CD8-positive, alpha-beta T cell (primary cell): ENCODE measurements at regions of chr11 and their contacts with region 1.

Region 1: DNA sequence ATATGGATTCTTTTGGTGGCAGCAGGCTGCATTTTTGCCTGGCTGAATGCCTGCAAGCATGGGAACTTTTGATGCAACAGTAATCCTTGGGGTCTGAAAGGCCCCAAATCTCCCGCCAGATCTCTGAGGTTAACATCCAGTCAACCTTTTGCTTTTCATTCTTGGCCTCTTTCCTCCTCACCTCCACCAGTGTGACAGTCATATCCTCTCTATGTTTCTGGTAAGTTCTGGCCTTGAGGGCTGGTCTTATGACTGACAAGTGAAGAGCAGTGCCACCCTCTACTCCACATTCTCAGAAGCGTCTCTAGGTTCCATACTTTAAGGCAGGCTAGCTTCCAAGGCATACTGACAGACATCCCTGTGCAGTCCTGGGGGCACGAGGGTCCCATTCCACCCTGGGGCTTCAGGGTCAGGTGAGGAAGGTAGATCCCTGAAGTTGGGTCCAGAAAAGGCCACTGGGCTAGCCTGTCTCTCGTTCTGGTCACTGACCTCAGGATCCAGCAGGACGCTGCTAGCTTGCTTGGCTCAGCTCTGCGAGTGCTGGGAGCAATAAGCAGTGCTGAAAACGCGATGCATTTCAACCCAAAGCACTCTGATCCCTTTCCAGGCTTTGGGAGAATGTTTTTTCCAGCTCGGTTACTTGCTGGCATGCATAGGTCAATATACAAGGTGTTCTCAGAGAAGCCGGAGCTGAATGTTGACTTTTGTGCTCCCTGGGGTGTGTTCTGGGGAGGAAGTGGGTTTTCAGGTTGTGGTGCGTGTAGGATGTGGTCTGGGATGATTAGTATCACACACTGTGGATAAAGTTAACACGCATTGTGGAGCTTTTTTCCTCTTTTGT is 75.2 kb downstream of the PTPRJ start:
- DNase-seq: peak in 8 of 9 experiments; percentile 36 to 80 (median 58)
- ATAC-seq: peak; percentile 76
- H3K4me3 ChIP-seq: peak overlapping the region; percentile 0 to 36
- H3K4me3 Mint-ChIP-seq: peak overlapping the region; percentile 72
- H3K27ac ChIP-seq: peak overlapping the region; percentile 13 to 38
- H3K27ac Mint-ChIP-seq: peak overlapping the region; percentile 87
- H3K4me1 ChIP-seq: peaks cover 69% of the 10 kb centered on the region
- H3K4me1 Mint-ChIP-seq: peaks cover 80% of the 10 kb centered on the region
- H3K27me3 ChIP-seq: no peaks in the 10 kb centered on the region
- H3K27me3 Mint-ChIP-seq: no peaks in the 10 kb centered on the region
- CTCF ChIP-seq: no peak

Region 2: DNA sequence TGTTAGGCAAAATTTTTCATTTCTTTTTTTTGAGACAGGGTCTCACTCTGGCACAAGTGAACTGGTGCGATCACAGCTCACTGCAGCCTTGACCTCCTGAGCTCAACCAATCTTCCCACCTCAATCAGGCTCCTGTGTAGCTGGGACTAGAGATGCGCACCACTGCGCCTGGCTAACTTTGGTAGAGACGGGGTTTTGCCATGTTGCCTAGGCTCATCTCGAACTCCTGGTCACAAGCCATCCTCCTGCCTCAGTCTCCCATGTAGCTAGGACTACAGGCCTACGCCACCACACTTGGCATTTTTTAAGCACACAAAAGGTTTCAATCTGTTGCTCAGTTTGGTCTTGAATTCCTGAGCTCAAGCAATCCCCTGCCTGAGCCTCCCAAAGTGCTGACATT is 297.4 kb before region 1 on chr11:
- CTCF ChIA-PET with region 1: no interaction called
- POLR2A ChIA-PET with region 1: no interaction called
- intact Hi-C with region 1: no loop called
- DNase-seq: peak in 1 of 9 experiments; percentile 27
- ATAC-seq: no peak
- H3K4me3 ChIP-seq: no peak overlapping the region
- H3K4me3 Mint-ChIP-seq: no peak overlapping the region
- H3K27ac ChIP-seq: no peak overlapping the region
- H3K27ac Mint-ChIP-seq: peak overlapping the region; percentile 60
- H3K4me1 ChIP-seq: no peaks in the 10 kb centered on the region
- H3K4me1 Mint-ChIP-seq: peaks cover 19% of the 10 kb centered on the region
- H3K27me3 ChIP-seq: no peaks in the 10 kb centered on the region
- H3K27me3 Mint-ChIP-seq: no peaks in the 10 kb centered on the region
- CTCF ChIP-seq: no peak

Region 3: DNA sequence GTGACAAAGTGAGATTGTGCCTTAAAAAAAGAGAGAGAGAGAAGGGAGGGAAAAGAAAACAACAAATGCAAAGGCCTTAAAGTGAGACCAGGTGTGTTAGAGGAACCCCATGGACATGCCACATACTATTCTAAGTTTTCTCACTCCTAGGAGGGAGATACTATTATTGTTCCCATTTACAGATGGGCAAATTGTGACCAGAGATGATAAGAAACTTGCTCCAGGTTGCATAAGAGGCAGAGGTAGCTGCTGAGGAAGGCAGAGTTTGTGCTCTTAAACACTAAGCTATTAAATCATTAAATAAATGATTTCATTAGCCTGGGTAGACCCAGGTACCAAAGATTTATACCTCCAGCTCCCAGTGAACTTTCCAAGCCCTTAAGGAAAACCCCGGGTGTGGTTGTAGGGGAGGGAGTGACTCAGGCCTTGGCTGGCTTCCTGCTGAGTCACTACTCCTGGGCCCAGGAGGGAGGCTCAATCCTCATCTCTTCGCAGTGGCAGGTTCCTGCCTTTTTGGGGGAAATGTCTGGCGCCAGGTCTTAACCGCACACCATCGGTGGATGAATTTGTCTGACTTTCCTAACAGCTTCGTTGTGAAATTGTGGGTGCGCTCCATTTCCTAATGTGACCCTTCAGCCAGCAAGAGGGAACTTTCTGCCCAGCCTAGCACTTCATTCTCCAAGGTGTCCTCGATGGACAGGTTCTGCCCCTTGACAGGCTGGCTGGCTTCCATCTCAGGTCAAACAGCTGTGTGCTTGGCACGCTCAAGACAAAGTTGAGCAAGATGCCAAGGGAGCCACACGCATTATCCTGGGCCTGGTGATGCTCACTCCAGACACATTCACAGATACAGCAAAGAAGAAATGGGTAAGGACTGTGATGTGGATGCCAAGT is 108.6 kb before region 1 on chr11:
- CTCF ChIA-PET with region 1: no interaction called
- POLR2A ChIA-PET with region 1: no interaction called
- intact Hi-C with region 1: loop called in 1 of 2 experiments (anchors 5 kb)
- DNase-seq: peak in 2 of 9 experiments; percentile 17 to 33
- ATAC-seq: no peak
- H3K4me3 ChIP-seq: no peak overlapping the region
- H3K4me3 Mint-ChIP-seq: no peak overlapping the region
- H3K27ac ChIP-seq: no peak overlapping the region
- H3K27ac Mint-ChIP-seq: no peak overlapping the region
- H3K4me1 ChIP-seq: peaks cover 22% of the 10 kb centered on the region
- H3K4me1 Mint-ChIP-seq: peaks cover 30% of the 10 kb centered on the region
- H3K27me3 ChIP-seq: no peaks in the 10 kb centered on the region
- H3K27me3 Mint-ChIP-seq: no peaks in the 10 kb centered on the region
- CTCF ChIP-seq: no peak

Region 4: DNA sequence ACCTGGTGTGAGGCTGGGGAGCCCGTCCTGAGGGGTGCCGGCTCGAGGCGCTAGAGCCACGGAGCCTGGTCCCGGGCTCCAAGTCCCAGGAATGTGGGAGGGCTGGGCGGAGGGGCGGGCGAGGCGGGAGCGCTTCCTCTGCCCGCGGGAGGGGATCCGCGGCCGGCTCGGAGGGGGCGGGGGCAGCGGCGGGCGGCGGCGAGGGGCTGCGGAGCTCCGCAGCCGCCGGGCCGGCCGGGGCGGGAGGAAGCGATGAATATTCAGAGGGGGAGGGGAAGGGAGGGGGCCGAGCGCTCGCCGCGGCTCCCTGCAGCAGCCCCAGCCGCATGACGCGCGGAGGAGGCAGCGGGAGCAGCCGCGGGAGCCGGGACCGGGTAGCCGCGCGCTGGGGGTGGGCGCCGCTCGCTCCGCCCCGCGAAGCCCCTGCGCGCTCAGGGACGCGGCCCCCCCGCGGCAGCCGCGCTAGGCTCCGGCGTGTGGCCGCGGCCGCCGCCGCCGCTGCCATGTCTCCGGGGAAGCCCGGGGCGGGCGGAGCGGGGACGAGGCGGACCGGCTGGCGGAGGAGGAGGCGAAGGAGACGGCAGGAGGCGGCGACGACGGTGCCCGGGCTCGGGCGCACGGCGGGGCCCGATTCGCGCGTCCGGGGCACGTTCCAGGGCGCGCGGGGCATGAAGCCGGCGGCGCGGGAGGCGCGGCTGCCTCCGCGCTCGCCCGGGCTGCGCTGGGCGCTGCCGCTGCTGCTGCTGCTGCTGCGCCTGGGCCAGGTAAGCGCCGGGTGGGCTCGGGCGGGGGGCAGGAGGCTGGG is 75.1 kb before region 1 on chr11 and contains the start of gene PTPRJ:
- CTCF ChIA-PET with region 1: interaction called, 3 read pairs
- POLR2A ChIA-PET with region 1: interaction called, 4 read pairs
- intact Hi-C with region 1: loop called in 1 of 2 experiments (anchors 5 kb)
- DNase-seq: peak in 8 of 9 experiments; percentile 39 to 85 (median 63)
- ATAC-seq: peak; percentile 70
- H3K4me3 ChIP-seq: peak within 1 kb of the TSS; percentile 43 to 65
- H3K4me3 Mint-ChIP-seq: peak within 1 kb of the TSS; percentile 93
- H3K27ac ChIP-seq: peak within 1 kb of the TSS; percentile 19 to 40
- H3K27ac Mint-ChIP-seq: peak within 1 kb of the TSS; percentile 52
- H3K4me1 ChIP-seq: peaks cover 30% of the 10 kb centered on the region
- H3K4me1 Mint-ChIP-seq: peaks cover 36% of the 10 kb centered on the region
- H3K27me3 ChIP-seq: no peaks in the 10 kb centered on the region
- H3K27me3 Mint-ChIP-seq: no peaks in the 10 kb centered on the region
- CTCF ChIP-seq: no peak
- total RNA-seq, gene PTPRJ: 26.9 to 31.4 TPM

Region 5: GRCh38 chr11:48013269-48013901 is 42.1 kb before region 1 on chr11:
- CTCF ChIA-PET with region 1: interaction called, 3 read pairs
- POLR2A ChIA-PET with region 1: interaction called, 12 read pairs
- intact Hi-C with region 1: no loop called
- DNase-seq: peak in 8 of 9 experiments; percentile 18 to 85 (median 63)
- ATAC-seq: peak; percentile 42
- H3K4me3 ChIP-seq: peak overlapping the region in 1 of 2 experiments; percentile 0
- H3K4me3 Mint-ChIP-seq: peak overlapping the region; percentile 27
- H3K27ac ChIP-seq: peak overlapping the region; percentile 36 to 91
- H3K27ac Mint-ChIP-seq: peak overlapping the region; percentile 92
- H3K4me1 ChIP-seq: peaks cover 85% of the 10 kb centered on the region
- H3K4me1 Mint-ChIP-seq: peaks cover 81% of the 10 kb centered on the region
- H3K27me3 ChIP-seq: no peaks in the 10 kb centered on the region
- H3K27me3 Mint-ChIP-seq: no peaks in the 10 kb centered on the region
- CTCF ChIP-seq: no peak

Region 6: GRCh38 chr11:48024635-48025071 is 30.9 kb before region 1 on chr11:
- CTCF ChIA-PET with region 1: no interaction called
- POLR2A ChIA-PET with region 1: no interaction called
- intact Hi-C with region 1: no loop called
- DNase-seq: no peak
- ATAC-seq: no peak
- H3K4me3 ChIP-seq: no peak overlapping the region
- H3K4me3 Mint-ChIP-seq: no peak overlapping the region
- H3K27ac ChIP-seq: no peak overlapping the region
- H3K27ac Mint-ChIP-seq: no peak overlapping the region
- H3K4me1 ChIP-seq: peaks cover 20% of the 10 kb centered on the region
- H3K4me1 Mint-ChIP-seq: peaks cover 41% of the 10 kb centered on the region
- H3K27me3 ChIP-seq: no peaks in the 10 kb centered on the region
- H3K27me3 Mint-ChIP-seq: no peaks in the 10 kb centered on the region
- CTCF ChIP-seq: no peak

Region 7: GRCh38 chr11:48043111-48043990 is 12.2 kb before region 1 on chr11:
- CTCF ChIA-PET with region 1: interaction called, 5 read pairs
- POLR2A ChIA-PET with region 1: interaction called, 11 read pairs
- intact Hi-C with region 1: no loop called
- DNase-seq: peak in 1 of 9 experiments; percentile 55
- ATAC-seq: peak; percentile 62
- H3K4me3 ChIP-seq: no peak overlapping the region
- H3K4me3 Mint-ChIP-seq: peak overlapping the region; percentile 33
- H3K27ac ChIP-seq: no peak overlapping the region
- H3K27ac Mint-ChIP-seq: peak overlapping the region; percentile 69
- H3K4me1 ChIP-seq: peaks cover 17% of the 10 kb centered on the region
- H3K4me1 Mint-ChIP-seq: peaks cover 46% of the 10 kb centered on the region
- H3K27me3 ChIP-seq: no peaks in the 10 kb centered on the region
- H3K27me3 Mint-ChIP-seq: no peaks in the 10 kb centered on the region
- CTCF ChIP-seq: no peak